ENCODE measurements at regions of chr2 and their contacts with region 1.

Region 1: DNA sequence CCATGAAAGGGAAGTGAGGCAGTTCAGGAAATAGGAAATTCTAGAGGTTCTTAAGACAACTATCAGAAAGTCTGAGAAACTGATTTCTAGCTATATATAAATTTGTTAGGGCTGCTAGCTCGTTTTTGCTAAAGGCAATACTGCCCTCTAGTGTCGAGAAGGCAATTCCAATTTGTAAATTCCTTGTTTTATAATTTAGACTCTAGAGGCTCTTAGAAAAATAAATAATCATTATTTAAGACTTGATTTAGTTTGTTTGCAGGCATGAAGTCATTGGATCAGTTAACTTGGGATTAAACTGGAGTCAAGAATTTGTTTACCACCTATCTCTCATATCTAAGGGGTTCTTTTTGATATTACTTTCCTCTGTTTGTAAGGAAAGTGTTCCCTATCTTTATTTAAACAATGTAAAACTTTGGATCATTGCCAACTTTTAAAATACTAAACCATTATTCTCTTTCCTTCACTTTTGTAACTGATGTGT is 66.2 kb downstream of the ACVR2A start:
- DNase-seq: peak; percentile 83
- H3K4me3 ChIP-seq: no peak overlapping the region
- H3K27ac ChIP-seq: peak overlapping the region; percentile 14
- H3K4me1 ChIP-seq: peaks cover 32% of the 10 kb centered on the region
- H3K27me3 ChIP-seq: no peaks in the 10 kb centered on the region
- CTCF ChIP-seq: peak; percentile 79

Region 2: DNA sequence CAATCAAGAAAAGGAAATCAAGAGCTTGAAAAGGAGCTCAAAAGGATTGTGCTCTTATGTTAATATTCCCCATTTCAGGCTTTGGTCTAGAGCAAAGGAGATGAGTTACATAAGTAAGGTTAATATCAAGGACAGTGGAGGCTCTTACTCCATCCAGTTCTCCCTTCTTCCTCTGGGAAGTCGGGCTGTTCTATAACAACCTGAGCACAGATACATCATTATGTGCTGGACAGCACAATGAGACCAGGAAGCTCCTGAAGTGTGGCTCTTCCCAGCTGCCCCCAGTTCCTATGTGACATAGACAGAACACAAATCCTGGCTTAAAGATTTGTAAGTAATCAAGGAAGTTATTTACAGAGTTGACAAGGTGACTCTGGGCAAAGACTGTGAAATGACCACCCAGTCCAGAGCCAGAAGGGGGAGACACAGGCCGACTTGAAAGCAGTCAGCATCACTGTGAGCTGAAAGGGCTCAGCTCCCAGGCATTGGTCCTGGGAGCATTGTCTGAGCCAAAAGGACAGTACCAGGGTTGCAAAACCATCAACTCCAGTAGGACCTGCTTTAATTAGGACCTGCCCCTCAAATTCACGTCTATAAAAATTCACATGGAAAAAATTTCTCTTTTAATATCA is 983.8 kb before region 1 on chr2:
- CTCF ChIA-PET with region 1: interaction called, 3 read pairs
- POLR2A ChIA-PET with region 1: no interaction called
- intact Hi-C with region 1: loop called (anchors 2 kb)
- DNase-seq: peak; percentile 73
- H3K4me3 ChIP-seq: no peak overlapping the region
- H3K27ac ChIP-seq: no peak overlapping the region
- H3K4me1 ChIP-seq: no peaks in the 10 kb centered on the region
- H3K27me3 ChIP-seq: no peaks in the 10 kb centered on the region
- CTCF ChIP-seq: peak; percentile 73

Region 3: GRCh38 chr2:147045113-147045512 is 865.9 kb before region 1 on chr2:
- CTCF ChIA-PET with region 1: interaction called, 10 read pairs
- POLR2A ChIA-PET with region 1: no interaction called
- intact Hi-C with region 1: loop called (anchors 1 kb)
- DNase-seq: peak; percentile 73
- H3K4me3 ChIP-seq: no peak overlapping the region
- H3K27ac ChIP-seq: no peak overlapping the region
- H3K4me1 ChIP-seq: no peaks in the 10 kb centered on the region
- H3K27me3 ChIP-seq: no peaks in the 10 kb centered on the region
- CTCF ChIP-seq: peak; percentile 78

Region 4: DNA sequence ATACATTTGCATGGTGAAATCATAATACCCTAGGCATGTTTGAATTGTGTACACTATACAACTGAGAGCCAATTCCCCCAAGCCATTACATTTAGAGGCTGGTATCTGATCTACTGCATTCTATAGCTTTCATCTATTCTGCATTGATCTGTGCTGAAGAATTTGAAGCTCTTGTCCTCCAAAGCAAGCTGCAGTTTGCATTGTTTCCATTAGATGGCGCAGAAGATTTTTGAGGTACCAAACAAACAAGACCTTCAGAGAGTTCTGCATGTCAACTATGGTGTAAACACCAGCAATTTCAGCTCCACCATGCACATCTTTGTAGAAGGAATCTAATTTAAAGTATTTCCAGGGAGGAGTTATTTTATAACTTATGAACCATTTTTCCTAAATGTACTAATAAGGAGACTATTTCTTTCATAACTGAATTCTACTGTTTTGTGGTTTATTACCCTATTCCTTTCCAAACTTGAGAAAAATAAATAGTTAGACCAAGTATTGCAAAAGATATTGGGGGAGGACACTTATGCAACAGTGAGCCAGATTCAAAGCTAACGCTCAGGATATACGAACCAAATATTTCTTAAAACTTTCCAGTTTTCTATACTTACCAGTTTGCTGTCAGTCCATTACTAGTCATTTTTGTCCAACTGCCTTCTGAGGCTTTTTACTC is 828.0 kb before region 1 on chr2:
- CTCF ChIA-PET with region 1: interaction called, 14 read pairs
- POLR2A ChIA-PET with region 1: no interaction called
- intact Hi-C with region 1: loop called (anchors 1 kb)
- DNase-seq: peak; percentile 83
- H3K4me3 ChIP-seq: no peak overlapping the region
- H3K27ac ChIP-seq: no peak overlapping the region
- H3K4me1 ChIP-seq: no peaks in the 10 kb centered on the region
- H3K27me3 ChIP-seq: no peaks in the 10 kb centered on the region
- CTCF ChIP-seq: peak; percentile 92

Region 5: DNA sequence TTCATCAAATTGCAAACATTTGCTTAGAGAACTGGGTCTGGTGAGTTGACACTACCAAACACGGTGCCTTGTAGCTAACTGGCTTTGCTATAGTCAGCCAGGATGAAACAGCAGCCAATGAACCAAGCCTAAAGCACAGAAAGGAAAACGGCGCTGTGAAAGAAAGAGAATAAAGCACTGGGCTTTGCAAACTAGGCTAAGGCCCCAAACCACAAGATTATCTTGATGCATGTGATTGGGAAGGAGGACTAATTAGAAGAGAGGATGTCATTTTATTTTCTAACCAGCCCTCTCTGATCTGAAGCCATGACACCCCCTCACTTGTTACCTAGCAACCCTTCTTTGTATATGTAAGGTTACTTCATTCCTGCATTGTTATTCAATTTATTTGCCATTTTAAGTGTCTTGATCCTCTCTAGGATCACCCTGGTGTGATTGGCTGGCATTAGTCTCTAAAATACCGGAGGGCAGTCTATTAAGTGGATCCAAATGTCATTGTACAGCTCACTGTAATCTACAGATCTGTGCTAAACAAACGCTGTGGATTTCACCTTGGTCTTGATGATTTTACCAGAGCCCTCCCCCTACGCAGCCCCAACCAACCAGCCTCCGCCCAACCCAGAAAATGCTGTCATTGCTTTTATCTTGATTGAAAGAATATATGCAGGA is 461.6 kb before region 1 on chr2:
- CTCF ChIA-PET with region 1: no interaction called
- POLR2A ChIA-PET with region 1: no interaction called
- intact Hi-C with region 1: loop called (anchors 1 kb)
- DNase-seq: peak; percentile 70
- H3K4me3 ChIP-seq: no peak overlapping the region
- H3K27ac ChIP-seq: peak overlapping the region; percentile 92
- H3K4me1 ChIP-seq: peaks cover 61% of the 10 kb centered on the region
- H3K27me3 ChIP-seq: no peaks in the 10 kb centered on the region
- CTCF ChIP-seq: no peak

Region 6: GRCh38 chr2:147843864-147844696 is 67.0 kb before region 1 on chr2:
- CTCF ChIA-PET with region 1: no interaction called
- POLR2A ChIA-PET with region 1: no interaction called
- intact Hi-C with region 1: loop called (anchors 2 kb)
- DNase-seq: peak; percentile 95
- H3K4me3 ChIP-seq: peak overlapping the region; percentile 75
- H3K27ac ChIP-seq: peak overlapping the region; percentile 95
- H3K4me1 ChIP-seq: peaks cover 14% of the 10 kb centered on the region
- H3K27me3 ChIP-seq: no peaks in the 10 kb centered on the region
- CTCF ChIP-seq: 0 out of 2 replicates have a peak, but pooled peaks have one; percentile 18